ENCODE measurements at regions of chr12 and their contacts with region 1.

Region 1: GRCh38 chr12:21248679-21249078 is 86.0 kb downstream of the SLCO1A2 start:
- DNase-seq: no peak
- ATAC-seq: no peak
- H3K4me3 ChIP-seq: no peak overlapping the region
- H3K4me3 Mint-ChIP-seq: no peak overlapping the region
- H3K27ac ChIP-seq: no peak overlapping the region
- H3K27ac Mint-ChIP-seq: no peak overlapping the region
- H3K4me1 ChIP-seq: no peaks in the 10 kb centered on the region
- H3K4me1 Mint-ChIP-seq: no peaks in the 10 kb centered on the region
- H3K27me3 ChIP-seq: no peaks in the 10 kb centered on the region
- H3K27me3 Mint-ChIP-seq: no peaks in the 10 kb centered on the region
- CTCF ChIP-seq: peak; percentile 18

Region 2: DNA sequence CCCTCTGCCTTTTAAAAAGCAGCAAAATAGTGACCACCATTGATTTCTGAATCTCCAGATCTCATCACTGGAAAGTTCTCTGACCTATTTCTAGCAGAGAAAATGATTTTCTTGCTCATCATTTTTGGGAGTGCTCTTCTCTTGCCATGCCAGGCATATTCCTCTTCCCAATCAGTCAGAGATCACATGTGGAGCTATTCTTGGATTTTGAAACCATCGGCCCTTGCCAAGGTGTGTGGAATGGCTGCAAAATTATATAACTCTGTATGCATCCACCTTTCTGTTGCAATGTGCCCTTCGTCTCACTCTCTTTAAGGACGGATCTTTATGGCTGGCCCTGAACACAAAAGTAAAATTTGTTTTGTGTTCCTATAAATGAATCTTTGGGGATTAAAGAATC is 434.4 kb after region 1 on chr12:
- CTCF ChIA-PET with region 1: interaction called, 29 read pairs
- POLR2A ChIA-PET with region 1: no interaction called
- intact Hi-C with region 1: loop called (anchors 1 kb)
- DNase-seq: no peak
- ATAC-seq: no peak
- H3K4me3 ChIP-seq: no peak overlapping the region
- H3K4me3 Mint-ChIP-seq: no peak overlapping the region
- H3K27ac ChIP-seq: no peak overlapping the region
- H3K27ac Mint-ChIP-seq: no peak overlapping the region
- H3K4me1 ChIP-seq: no peaks in the 10 kb centered on the region
- H3K4me1 Mint-ChIP-seq: no peaks in the 10 kb centered on the region
- H3K27me3 ChIP-seq: peaks cover 0 to 4% (median 2%) of the 10 kb centered on the region in 4 experiments
- H3K27me3 Mint-ChIP-seq: peaks cover 12% of the 10 kb centered on the region
- CTCF ChIP-seq: no peak

Measured in B cell (primary cell).